Heart right ventricle (tissue), 16 donors: ENCODE measurements at regions of chr2 and their contacts with region 1.

Region 1: DNA sequence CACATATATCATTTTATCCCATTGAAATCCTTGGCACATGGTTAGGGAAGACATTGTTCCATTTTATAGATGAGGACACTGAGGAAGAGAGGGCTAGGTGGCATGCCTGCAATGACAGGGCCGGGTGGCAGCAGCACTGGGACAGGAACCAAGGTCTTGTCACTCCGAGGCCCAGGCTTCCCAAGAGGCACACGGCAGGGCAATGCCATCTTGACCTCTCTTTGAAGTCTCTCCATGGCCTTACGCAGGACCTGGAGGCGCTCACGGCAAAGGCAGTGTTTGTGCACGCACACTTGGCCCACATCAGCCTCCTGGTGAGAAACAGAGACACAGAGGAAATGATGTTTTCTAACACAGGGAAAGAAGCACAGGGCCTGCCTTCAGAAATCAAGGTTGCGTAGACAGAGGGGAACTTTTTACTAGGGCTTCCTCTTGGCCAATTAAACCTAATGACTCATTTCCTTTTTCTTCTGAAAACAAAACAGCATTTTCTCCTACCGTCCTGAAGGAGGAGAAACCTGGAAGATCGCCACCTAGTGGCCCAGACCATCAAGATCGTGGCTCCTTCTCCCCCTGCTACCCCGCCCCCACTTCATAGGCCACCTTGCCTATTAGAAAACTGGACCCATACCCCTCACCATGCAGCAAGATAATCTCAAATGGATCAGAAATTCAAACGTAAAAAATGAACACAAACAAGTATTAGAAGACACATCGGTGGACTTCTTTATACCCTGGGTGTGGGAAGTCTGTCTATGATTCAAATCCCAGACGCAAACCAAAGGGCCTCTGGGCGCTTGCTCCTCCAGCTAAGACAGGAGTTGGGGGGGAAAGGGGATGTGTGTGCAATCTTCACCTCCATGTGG is 74.6 kb upstream of the SP3 start:
- DNase-seq: peak; percentile 82 to 92
- ATAC-seq: peak; percentile 84 to 95 (median 88)
- H3K4me3 ChIP-seq: peak overlapping the region in 5 of 10 donors; percentile 7 to 29 (median 23)
- H3K27ac ChIP-seq: peak overlapping the region; percentile 68 to 95 (median 83)
- H3K4me1 ChIP-seq: peaks cover 10 to 63% (median 41%) of the 10 kb centered on the region in 9 donors
- H3K27me3 ChIP-seq: no peaks in the 10 kb centered on the region
- CTCF ChIP-seq: peak; percentile 79 to 96 (median 89)

Region 2: GRCh38 chr2:173752152-173752551 is 287.6 kb before region 1 on chr2:
- intact Hi-C with region 1: loop called in 2 of 10 experiments (anchors 10 kb)
- DNase-seq: no peak
- ATAC-seq: no peak
- H3K4me3 ChIP-seq: no peak overlapping the region
- H3K27ac ChIP-seq: no peak overlapping the region
- H3K4me1 ChIP-seq: peaks cover 0 to 15% (median 7%) of the 10 kb centered on the region in 9 donors
- H3K27me3 ChIP-seq: peaks cover 0 to 9% (median 0%) of the 10 kb centered on the region in 7 donors
- CTCF ChIP-seq: peak in 3 of 9 donors; percentile 14 to 30 (median 21)

Region 3: GRCh38 chr2:173760553-173760952 is 279.2 kb before region 1 on chr2:
- intact Hi-C with region 1: loop called in 3 of 10 experiments (anchors 10 kb)
- DNase-seq: no peak
- ATAC-seq: no peak
- H3K4me3 ChIP-seq: no peak overlapping the region
- H3K27ac ChIP-seq: no peak overlapping the region
- H3K4me1 ChIP-seq: peaks cover 0 to 3% (median 0%) of the 10 kb centered on the region in 9 donors
- H3K27me3 ChIP-seq: no peaks in the 10 kb centered on the region
- CTCF ChIP-seq: no peak

Region 4: DNA sequence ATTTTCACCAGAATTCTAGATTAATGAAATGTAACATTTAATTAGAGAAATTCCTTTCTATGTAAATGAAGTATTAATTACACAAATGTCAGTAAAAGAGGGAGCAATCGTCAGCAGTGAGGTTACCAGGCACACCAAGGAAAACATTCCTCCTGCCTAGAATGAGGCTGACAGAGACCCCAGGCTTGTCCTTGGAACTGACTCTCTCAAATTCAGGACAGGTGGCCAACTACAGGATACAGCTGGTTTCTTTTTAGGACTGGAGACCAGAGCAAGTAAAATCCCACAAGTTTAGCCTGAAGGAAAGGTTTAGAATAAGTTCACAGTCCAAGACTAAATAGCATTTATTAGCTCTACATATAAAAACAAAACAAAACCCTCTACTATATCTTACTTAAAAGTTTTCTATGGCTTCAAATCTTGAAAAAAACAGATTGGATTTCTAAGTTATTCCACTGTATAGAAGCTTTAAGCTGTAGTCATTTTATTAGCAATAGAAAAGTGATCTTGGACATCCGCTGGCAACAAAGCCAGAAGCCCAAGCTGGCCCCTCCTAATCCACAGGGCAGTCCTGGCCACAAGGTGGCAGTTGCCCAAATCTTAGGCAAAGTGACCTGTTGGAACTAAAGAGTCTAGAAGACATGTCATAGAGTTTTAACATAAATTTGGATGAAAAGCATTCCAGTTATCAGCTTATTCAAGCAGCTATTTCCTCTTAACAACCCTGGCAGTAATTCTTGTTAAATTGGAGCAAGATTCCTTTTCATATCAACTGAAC is 155.6 kb before region 1 on chr2:
- intact Hi-C with region 1: loop called in 9 of 10 experiments (anchors 2 to 10 kb)
- DNase-seq: peak; percentile 47 to 48
- ATAC-seq: peak in 7 of 8 donors; percentile 42 to 81 (median 70)
- H3K4me3 ChIP-seq: no peak overlapping the region
- H3K27ac ChIP-seq: no peak overlapping the region
- H3K4me1 ChIP-seq: peaks cover 0 to 14% (median 6%) of the 10 kb centered on the region in 9 donors
- H3K27me3 ChIP-seq: peaks cover 0 to 3% (median 0%) of the 10 kb centered on the region in 7 donors
- CTCF ChIP-seq: peak; percentile 28 to 80 (median 70)

Region 5: DNA sequence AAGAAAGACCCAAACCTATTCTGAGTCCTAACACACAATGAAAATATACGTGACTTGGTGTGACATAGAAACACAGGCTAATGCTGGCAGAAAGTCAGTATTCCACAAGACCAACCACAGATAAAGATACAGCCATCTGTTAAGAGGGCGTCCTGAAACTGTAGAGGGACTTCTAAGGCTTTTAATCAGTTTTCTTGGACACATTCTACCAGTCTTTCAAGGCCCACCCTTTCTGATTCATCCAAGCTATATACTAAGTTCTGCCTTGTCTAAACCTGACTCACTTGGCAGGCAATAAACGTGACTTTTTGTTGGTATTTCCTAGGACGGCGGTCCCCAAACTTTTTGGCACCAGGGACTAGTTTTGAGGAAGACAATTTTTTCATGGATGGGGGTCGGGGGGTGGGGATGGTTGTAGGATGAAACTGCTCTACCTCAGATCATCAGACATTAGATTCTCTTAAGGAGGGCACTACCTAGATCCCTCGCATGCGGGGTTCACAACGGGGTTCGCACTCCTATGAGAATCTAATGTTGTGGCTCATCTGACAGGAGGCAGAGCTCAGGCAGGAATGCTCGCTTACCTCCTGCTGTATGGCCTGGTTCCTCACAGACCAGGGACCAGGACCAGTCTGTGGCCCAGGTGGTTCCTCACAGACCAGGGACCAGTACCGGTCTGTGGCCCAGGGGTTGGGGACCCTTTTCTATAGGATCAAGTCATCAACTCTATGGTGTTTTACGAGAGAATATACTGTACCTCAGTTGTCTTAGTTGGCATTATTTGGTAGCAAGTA is 136.0 kb before region 1 on chr2:
- intact Hi-C with region 1: no loop called
- DNase-seq: no peak
- ATAC-seq: peak in 1 of 8 donors; percentile 19
- H3K4me3 ChIP-seq: no peak overlapping the region
- H3K27ac ChIP-seq: no peak overlapping the region
- H3K4me1 ChIP-seq: peaks cover 0 to 2% (median 0%) of the 10 kb centered on the region in 9 donors
- H3K27me3 ChIP-seq: no peaks in the 10 kb centered on the region
- CTCF ChIP-seq: no peak

Region 6: DNA sequence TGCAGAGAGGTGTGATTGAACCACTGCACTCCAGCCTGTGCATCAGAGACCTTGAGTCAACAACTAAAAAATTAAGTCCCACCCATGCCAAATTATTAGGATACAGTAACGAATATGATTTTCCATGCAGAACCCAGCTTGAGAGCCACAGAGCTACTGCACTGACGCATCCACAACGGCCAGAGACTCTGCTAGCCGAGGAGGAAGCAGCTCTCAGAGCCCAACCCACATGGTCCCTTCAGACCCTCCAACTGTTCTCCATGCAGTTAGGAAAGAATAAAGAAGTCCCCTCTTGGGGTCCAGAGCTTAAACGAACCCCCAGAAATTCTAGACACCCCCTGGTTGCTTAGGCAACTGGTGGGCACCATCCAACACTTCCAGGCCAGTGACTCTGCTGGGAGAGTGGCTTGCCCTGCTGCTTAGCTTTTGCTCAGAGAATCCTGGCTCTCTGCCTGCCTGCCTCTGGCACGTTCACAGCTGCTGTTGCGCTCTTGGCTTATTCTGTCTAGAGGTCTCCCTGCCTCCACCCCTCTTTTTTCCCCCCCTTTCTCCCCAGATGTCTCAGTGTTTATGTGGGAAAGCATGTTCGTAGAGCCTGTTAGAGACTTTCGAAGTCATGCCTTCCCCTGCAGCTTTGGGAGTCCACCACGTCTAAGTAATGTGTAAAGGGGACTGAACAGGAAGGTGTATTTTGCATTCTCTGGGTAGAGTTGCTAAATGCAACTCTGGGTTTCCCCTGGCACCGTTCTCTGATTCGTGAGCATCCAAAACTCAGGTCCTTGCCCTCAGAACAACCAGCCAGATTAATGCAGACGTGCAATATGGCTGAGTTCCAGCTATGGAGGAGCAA is 48.6 kb before region 1 on chr2:
- intact Hi-C with region 1: loop called in 4 of 10 experiments (anchors 2 to 5 kb)
- DNase-seq: peak; percentile 83 to 88
- ATAC-seq: peak; percentile 66 to 91 (median 72)
- H3K4me3 ChIP-seq: peak overlapping the region in 1 of 10 donors; percentile 6
- H3K27ac ChIP-seq: peak overlapping the region; percentile 45 to 87 (median 68)
- H3K4me1 ChIP-seq: peaks cover 28 to 70% (median 49%) of the 10 kb centered on the region in 9 donors
- H3K27me3 ChIP-seq: no peaks in the 10 kb centered on the region
- CTCF ChIP-seq: no peak